ENCODE measurements at regions of chr15 and their contacts with region 1.

Region 1: GRCh38 chr15:51888593-51889195 is 59.2 kb downstream of the TMOD3 start:
- DNase-seq: peak; percentile 43
- H3K4me3 ChIP-seq: no peak overlapping the region
- H3K27ac ChIP-seq: no peak overlapping the region
- H3K4me1 ChIP-seq: peaks cover 9% of the 10 kb centered on the region
- H3K27me3 ChIP-seq: no peaks in the 10 kb centered on the region
- CTCF ChIP-seq: peak; percentile 44 to 48
- POLR2A ChIP-seq: no peak

Region 2: GRCh38 chr15:51829360-51830275 is 59.1 kb before region 1 on chr15 and contains the start of gene TMOD3:
- CTCF ChIA-PET with region 1: interaction called, 15 read pairs
- POLR2A ChIA-PET with region 1: no interaction called
- dilution Hi-C with region 1: no loop called
- intact Hi-C with region 1: no loop called
- DNase-seq: peak; percentile 94
- H3K4me3 ChIP-seq: peak within 1 kb of the TSS; percentile 88 to 97 (median 90)
- H3K27ac ChIP-seq: peak within 1 kb of the TSS; percentile 88
- H3K4me1 ChIP-seq: peaks cover 12% of the 10 kb centered on the region
- H3K27me3 ChIP-seq: no peaks in the 10 kb centered on the region
- CTCF ChIP-seq: peak in 1 of 2 donors; percentile 1
- POLR2A ChIP-seq: peak; percentile 91
- total RNA-seq, gene TMOD3: 63.7 and 64.3 TPM in 2 replicates

Region 3: GRCh38 chr15:51861557-51862359 is 26.9 kb before region 1 on chr15:
- CTCF ChIA-PET with region 1: interaction called, 11 read pairs
- POLR2A ChIA-PET with region 1: no interaction called
- dilution Hi-C with region 1: no loop called
- intact Hi-C with region 1: no loop called
- DNase-seq: peak; percentile 67
- H3K4me3 ChIP-seq: no peak overlapping the region
- H3K27ac ChIP-seq: peak overlapping the region; percentile 55
- H3K4me1 ChIP-seq: peaks cover 9% of the 10 kb centered on the region
- H3K27me3 ChIP-seq: no peaks in the 10 kb centered on the region
- CTCF ChIP-seq: no peak
- POLR2A ChIP-seq: no peak

Region 4: DNA sequence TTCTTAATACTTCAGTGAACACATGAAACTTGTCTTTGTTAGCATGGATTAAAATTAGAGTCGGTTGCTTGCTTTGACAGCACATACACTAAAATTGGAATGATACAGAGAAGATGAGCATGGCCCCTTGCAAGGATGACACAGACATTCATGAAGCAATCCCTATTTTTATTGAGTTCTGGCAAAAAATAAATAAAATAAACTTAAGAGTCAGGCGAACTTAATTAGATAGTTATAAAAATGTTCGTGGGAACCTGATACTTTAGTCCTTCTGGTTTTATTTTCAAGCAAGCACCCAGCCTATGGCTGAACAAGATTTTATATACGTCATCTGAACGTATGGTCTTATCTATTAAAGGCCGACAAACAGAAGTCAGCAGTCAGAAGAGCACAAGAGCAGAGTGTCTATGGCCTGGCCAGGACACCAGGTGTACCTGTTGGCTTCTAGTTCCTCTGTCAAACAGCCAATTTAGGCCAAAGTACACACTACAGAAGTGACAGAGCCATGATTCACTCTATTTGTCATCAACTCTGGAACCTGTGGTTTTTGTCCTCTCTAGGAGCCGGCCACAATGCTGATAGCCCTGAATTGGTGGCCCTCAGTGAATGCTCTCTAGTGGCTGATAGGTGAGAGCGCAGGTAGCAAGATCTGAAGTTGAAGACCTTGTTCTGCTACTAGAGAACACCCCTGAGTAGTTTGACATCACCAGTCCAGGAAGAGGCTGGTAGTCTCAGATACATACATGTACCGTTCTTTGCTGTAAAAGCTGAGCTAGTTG is 18.6 kb after region 1 on chr15:
- CTCF ChIA-PET with region 1: interaction called, 55 read pairs
- POLR2A ChIA-PET with region 1: no interaction called
- dilution Hi-C with region 1: no loop called
- intact Hi-C with region 1: no loop called
- DNase-seq: no peak
- H3K4me3 ChIP-seq: no peak overlapping the region
- H3K27ac ChIP-seq: no peak overlapping the region
- H3K4me1 ChIP-seq: no peaks in the 10 kb centered on the region
- H3K27me3 ChIP-seq: no peaks in the 10 kb centered on the region
- CTCF ChIP-seq: no peak
- POLR2A ChIP-seq: no peak